Activated CD4-positive, alpha-beta memory T cell treated with anti-CD3 and anti-CD28 coated beads, Interleukin-2, amount 10 ng/mL, durations not matched to agents 7 days and 5 days (primary cell): ENCODE measurements at regions of chr2 and their contacts with region 1.

Region 1: GRCh38 chr2:100562732-100563720 is at the start of gene PDCL3:
- DNase-seq: peak; percentile 95
- H3K4me3 Mint-ChIP-seq: peak within 1 kb of the TSS; percentile 93
- H3K27ac Mint-ChIP-seq: peak within 1 kb of the TSS; percentile 100
- H3K4me1 Mint-ChIP-seq: peaks cover 53% of the 10 kb centered on the region
- H3K27me3 Mint-ChIP-seq: no peaks in the 10 kb centered on the region
- total RNA-seq, gene PDCL3: 39.6 to 40.4 TPM

Region 2: GRCh38 chr2:100580367-100581276 is 17.6 kb after region 1 on chr2:
- CTCF ChIA-PET with region 1: interaction called, 17 read pairs
- POLR2A ChIA-PET with region 1: interaction called, 105 read pairs
- DNase-seq: peak; percentile 68
- H3K4me3 Mint-ChIP-seq: peak overlapping the region; percentile 63
- H3K27ac Mint-ChIP-seq: peak overlapping the region; percentile 92
- H3K4me1 Mint-ChIP-seq: peaks cover 47% of the 10 kb centered on the region
- H3K27me3 Mint-ChIP-seq: peaks cover 2% of the 10 kb centered on the region

Region 3: DNA sequence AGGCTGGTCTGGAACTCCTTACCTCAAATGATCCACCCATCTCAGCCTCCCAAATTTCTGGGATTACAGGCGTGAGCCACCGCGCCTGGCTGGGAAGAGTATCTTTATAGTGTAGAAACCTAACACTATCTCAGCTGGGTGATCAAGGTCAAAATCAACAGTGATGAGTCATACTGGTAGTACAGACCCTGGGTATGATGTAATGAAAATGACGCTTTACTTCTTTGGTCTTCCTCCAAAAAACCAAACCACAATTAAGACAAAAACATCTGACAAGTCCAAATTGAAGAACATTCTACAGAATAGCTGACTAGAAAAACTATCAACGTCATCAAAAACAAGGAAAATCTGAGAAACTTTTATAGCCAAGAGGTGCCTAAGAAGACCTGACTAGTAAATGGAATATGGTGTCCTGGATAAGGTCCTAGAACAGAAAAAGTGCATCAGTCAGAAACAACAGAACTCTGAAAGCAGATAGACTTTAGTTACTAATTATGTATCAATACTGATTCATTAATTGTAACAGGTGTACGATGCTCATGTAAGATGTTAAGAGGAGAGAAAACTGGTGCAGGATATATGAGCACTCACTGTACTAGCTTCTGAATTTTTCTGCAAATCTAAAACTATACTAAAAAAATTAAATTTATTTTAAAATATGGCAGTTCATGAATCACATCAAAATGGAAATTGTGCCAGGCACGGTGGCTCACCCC is 25.2 kb after region 1 on chr2:
- CTCF ChIA-PET with region 1: interaction called, 9 read pairs
- POLR2A ChIA-PET with region 1: interaction called, 105 read pairs
- DNase-seq: peak; percentile 35
- H3K4me3 Mint-ChIP-seq: peak overlapping the region; percentile 25
- H3K27ac Mint-ChIP-seq: peak overlapping the region; percentile 69
- H3K4me1 Mint-ChIP-seq: peaks cover 62% of the 10 kb centered on the region
- H3K27me3 Mint-ChIP-seq: peaks cover 11% of the 10 kb centered on the region